ENCODE measurements at regions of chr14 and their contacts with region 1.

Region 1: DNA sequence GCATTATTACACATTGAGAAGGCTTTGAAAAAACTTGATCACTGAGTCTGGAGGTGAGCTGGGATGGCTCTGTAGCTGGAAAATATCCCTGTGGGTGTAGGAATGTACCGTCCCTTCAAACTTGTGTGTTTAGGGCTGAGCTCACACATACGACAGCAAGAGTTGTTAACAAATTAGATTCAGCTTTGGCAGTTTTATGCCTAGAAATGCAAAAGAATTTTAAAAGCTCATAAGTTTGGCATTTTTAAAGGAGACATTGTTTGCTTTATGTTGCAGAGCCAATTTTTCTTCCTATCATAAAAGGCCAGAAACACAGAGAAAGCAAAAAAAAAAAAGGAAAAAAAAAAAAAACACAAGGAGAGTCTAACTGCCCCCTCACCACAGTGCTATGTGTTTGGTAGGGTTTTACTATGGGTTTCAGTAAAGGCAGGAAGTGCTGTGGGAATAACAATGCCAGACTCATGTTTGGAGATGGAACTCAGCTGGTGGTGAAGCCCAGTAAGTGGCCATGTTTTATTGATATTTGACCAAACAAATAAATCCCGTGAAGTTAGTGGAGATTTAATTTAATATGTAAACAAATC is 78.4 kb downstream of the DAD1 start:
- DNase-seq: peak; percentile 35
- ATAC-seq: peak; percentile 91
- H3K4me3 ChIP-seq: no peak overlapping the region
- H3K27ac ChIP-seq: no peak overlapping the region
- H3K4me1 ChIP-seq: peaks cover 4% of the 10 kb centered on the region; the same call in 1 of the 2 replicates
- H3K27me3 ChIP-seq: no peaks in the 10 kb centered on the region
- CTCF ChIP-seq: no peak

Region 2: DNA sequence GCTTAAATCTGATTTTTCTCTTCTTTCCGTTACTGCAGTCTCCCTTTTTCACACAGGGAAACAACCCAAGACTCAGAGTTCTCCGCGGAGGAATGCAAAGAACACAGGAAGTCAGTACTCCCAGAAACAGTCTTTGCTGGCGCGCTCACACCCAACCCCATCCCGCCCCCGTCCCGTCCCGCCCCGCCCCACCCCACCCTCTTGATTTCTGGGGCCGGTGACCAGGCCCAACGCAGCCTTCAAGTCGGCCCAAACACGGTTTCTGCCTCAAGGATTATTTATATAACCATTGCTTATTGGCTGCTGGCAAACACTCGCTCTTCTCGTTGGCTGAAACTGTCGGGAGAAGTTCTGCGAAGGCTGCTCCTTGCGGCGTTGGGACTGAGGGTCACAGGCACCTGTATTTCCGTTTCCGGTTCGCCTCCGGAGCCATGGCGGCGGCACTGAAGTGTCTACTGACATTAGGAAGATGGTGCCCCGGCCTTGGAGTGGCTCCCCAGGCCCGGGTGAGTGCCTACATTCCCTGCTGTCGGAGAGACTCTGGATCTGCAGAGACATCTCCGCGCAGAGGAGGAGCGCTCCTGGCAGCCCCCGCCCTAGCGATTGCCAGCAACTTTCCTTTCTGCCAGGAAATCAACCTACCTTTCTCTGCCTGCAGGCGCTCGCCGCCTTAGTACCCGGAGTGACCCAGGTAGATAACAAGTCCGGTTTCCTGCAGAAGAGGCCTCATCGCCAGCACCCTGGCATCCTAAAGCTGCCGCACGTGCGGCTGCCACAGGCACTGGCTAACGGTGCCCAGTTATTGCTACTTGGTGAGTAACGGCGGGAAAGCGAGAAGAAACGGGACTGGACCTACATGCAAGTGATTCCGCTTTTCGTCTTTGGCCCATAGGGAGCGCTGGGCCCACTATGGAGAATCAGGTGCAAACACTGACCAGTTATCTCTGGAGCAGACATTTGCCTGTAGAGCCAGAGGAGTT is 1520.8 kb before region 1 on chr14 and contains the start of gene METTL17:
- CTCF ChIA-PET with region 1: no interaction called
- POLR2A ChIA-PET with region 1: interaction called, 20 read pairs
- intact Hi-C with region 1: no loop called
- DNase-seq: peak; percentile 98
- ATAC-seq: peak; percentile 86
- H3K4me3 ChIP-seq: peak within 1 kb of the TSS; percentile 92
- H3K27ac ChIP-seq: peak within 1 kb of the TSS; percentile 58
- H3K4me1 ChIP-seq: peaks cover 42% of the 10 kb centered on the region
- H3K27me3 ChIP-seq: no peaks in the 10 kb centered on the region
- CTCF ChIP-seq: no peak; the same call in none of the 2 replicates
- total RNA-seq, gene METTL17: 83.0 and 99.0 TPM in 2 replicates

Region 3: GRCh38 chr14:22536853-22537338 is 26.3 kb after region 1 on chr14:
- CTCF ChIA-PET with region 1: interaction called, 12 read pairs
- POLR2A ChIA-PET with region 1: no interaction called
- intact Hi-C with region 1: loop called (anchors 2 kb)
- DNase-seq: peak; percentile 98
- ATAC-seq: peak; percentile 99
- H3K4me3 ChIP-seq: no peak overlapping the region
- H3K27ac ChIP-seq: peak overlapping the region; percentile 58
- H3K4me1 ChIP-seq: peaks cover 15% of the 10 kb centered on the region
- H3K27me3 ChIP-seq: no peaks in the 10 kb centered on the region
- CTCF ChIP-seq: no peak

Region 4: GRCh38 chr14:22549981-22550673 is 39.5 kb after region 1 on chr14:
- CTCF ChIA-PET with region 1: no interaction called
- POLR2A ChIA-PET with region 1: no interaction called
- intact Hi-C with region 1: loop called (anchors 2 kb)
- DNase-seq: peak; percentile 78
- ATAC-seq: peak; percentile 53
- H3K4me3 ChIP-seq: no peak overlapping the region
- H3K27ac ChIP-seq: peak overlapping the region; percentile 54
- H3K4me1 ChIP-seq: peaks cover 55% of the 10 kb centered on the region
- H3K27me3 ChIP-seq: no peaks in the 10 kb centered on the region
- CTCF ChIP-seq: no peak